Ascending aorta (tissue), 2 donors: ENCODE measurements at regions of chr10 and their contacts with region 1.

Region 1: GRCh38 chr10:101067356-101068083 is 5.7 kb downstream of the KAZALD1 start:
- DNase-seq: peak in 1 of 2 donors; percentile 89
- H3K4me3 ChIP-seq: peak overlapping the region; percentile 61 to 64
- H3K27ac ChIP-seq: peak overlapping the region; percentile 74 to 82
- H3K4me1 ChIP-seq: peaks cover 12 to 31% of the 10 kb centered on the region in 2 donors
- H3K27me3 ChIP-seq: no peaks in the 10 kb centered on the region
- CTCF ChIP-seq: peak; percentile 85 to 91 (median 89)

Region 2: GRCh38 chr10:101018600-101019439 is 48.7 kb before region 1 on chr10:
- intact Hi-C with region 1: loop called (anchors 1 kb)
- DNase-seq: peak in 1 of 2 donors; percentile 90
- H3K4me3 ChIP-seq: peak overlapping the region in 1 of 2 donors; percentile 13
- H3K27ac ChIP-seq: no peak overlapping the region
- H3K4me1 ChIP-seq: peaks cover 0 to 7% of the 10 kb centered on the region in 2 donors
- H3K27me3 ChIP-seq: no peaks in the 10 kb centered on the region
- CTCF ChIP-seq: peak; percentile 57 to 81 (median 70)

Region 3: GRCh38 chr10:101042667-101043355 is 24.7 kb before region 1 on chr10:
- intact Hi-C with region 1: loop called (anchors 1 kb)
- DNase-seq: peak; percentile 96 to 99
- H3K4me3 ChIP-seq: peak overlapping the region; percentile 56 to 64
- H3K27ac ChIP-seq: peak overlapping the region; percentile 87 to 93
- H3K4me1 ChIP-seq: peaks cover 0 to 18% of the 10 kb centered on the region in 2 donors
- H3K27me3 ChIP-seq: peaks cover 6% of the 10 kb centered on the region
- CTCF ChIP-seq: no peak

Region 4: DNA sequence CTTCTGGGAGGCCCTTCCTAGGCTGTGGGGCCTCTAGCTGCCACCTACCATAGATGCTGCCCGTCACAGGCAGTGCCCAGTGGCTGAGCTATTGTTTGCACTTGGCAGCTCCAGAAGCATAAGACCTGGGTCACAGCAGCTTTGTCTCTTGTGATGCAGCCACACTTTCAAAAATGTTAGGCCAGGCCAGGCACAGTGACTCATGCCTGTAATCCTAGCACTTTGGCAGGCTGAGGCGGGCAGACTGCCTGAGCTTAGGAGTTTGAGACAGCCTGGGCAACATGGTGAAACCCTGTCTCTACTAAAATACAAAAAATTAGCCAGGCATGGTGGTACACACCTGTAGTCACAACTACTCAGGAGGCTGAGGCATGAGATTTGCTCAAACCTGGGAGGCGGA is 15.2 kb before region 1 on chr10:
- intact Hi-C with region 1: loop called (anchors 2 kb)
- DNase-seq: peak; percentile 52 to 81
- H3K4me3 ChIP-seq: no peak overlapping the region
- H3K27ac ChIP-seq: peak overlapping the region in 1 of 2 donors; percentile 68
- H3K4me1 ChIP-seq: peaks cover 8 to 11% of the 10 kb centered on the region in 2 donors
- H3K27me3 ChIP-seq: peaks cover 25% of the 10 kb centered on the region
- CTCF ChIP-seq: peak in 1 of 3 experiments; percentile 11